ENCODE measurements at regions of chr11 and their contacts with region 1.

Region 1: GRCh38 chr11:117443266-117444195 is 115.9 kb downstream of the CEP164 start:
- DNase-seq: peak; percentile 78 to 84
- H3K4me3 ChIP-seq: no peak overlapping the region
- H3K4me3 Mint-ChIP-seq: no peak overlapping the region
- H3K27ac Mint-ChIP-seq: no peak overlapping the region
- H3K4me1 ChIP-seq: no peaks in the 10 kb centered on the region
- H3K4me1 Mint-ChIP-seq: no peaks in the 10 kb centered on the region
- H3K27me3 ChIP-seq: no peaks in the 10 kb centered on the region; the same call in 1 of the 2 replicates
- H3K27me3 Mint-ChIP-seq: peaks cover 41% of the 10 kb centered on the region
- CTCF ChIP-seq: peak; percentile 86 to 98

Region 2: DNA sequence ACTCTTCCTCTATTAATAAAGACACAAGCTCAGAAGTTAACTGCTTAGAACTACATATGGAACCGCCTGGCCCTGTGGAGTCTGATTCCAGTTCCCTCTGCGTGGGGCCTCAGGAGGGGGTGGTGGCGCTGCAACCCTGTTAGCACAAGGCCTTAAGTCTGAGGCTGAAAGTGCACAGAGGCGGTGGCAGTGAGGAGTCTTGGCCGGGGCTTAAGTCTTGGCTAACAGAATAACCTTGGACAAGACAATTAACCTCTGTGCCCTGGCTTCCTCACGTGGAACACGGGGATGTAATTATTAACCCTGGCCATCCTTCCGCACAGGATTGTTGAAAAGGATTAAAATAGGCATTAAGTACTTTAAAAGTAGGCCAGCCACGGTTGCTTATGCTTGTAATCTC is 75.6 kb after region 1 on chr11:
- CTCF ChIA-PET with region 1: no interaction called
- POLR2A ChIA-PET with region 1: no interaction called
- intact Hi-C with region 1: no loop called
- DNase-seq: peak; percentile 63 to 83
- H3K4me3 ChIP-seq: no peak overlapping the region
- H3K4me3 Mint-ChIP-seq: no peak overlapping the region
- H3K27ac Mint-ChIP-seq: no peak overlapping the region
- H3K4me1 ChIP-seq: peaks cover 18% of the 10 kb centered on the region
- H3K4me1 Mint-ChIP-seq: peaks cover 13% of the 10 kb centered on the region
- H3K27me3 ChIP-seq: no peaks in the 10 kb centered on the region
- H3K27me3 Mint-ChIP-seq: no peaks in the 10 kb centered on the region
- CTCF ChIP-seq: peak in 1 of 2 experiments; percentile 68

Region 3: DNA sequence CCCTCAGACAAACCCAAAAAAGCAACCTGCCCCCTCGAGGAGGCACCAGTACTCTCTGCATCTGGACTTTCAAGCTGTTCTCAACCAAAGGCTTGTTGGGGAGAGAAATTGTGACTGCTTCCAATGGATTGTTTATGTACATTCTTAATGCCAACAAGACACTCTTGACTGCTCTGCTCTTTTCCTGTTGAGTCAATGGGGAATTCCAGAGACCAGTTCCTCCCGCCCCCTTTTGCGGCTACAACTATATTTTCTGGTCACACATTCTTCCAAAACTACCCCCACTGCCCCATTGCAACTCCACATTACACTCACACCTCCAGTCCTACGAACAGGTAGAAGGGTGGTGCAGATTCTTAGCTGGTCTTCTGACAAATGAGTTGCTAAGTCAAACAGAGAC is 166.5 kb after region 1 on chr11:
- CTCF ChIA-PET with region 1: no interaction called
- POLR2A ChIA-PET with region 1: no interaction called
- intact Hi-C with region 1: loop called (anchors 5 kb)
- DNase-seq: no peak
- H3K4me3 ChIP-seq: no peak overlapping the region
- H3K4me3 Mint-ChIP-seq: no peak overlapping the region
- H3K27ac Mint-ChIP-seq: no peak overlapping the region
- H3K4me1 ChIP-seq: no peaks in the 10 kb centered on the region
- H3K4me1 Mint-ChIP-seq: no peaks in the 10 kb centered on the region
- H3K27me3 ChIP-seq: peaks cover 8% of the 10 kb centered on the region; the same call in 1 of the 2 replicates
- H3K27me3 Mint-ChIP-seq: peaks cover 31% of the 10 kb centered on the region
- CTCF ChIP-seq: no peak

Region 4: DNA sequence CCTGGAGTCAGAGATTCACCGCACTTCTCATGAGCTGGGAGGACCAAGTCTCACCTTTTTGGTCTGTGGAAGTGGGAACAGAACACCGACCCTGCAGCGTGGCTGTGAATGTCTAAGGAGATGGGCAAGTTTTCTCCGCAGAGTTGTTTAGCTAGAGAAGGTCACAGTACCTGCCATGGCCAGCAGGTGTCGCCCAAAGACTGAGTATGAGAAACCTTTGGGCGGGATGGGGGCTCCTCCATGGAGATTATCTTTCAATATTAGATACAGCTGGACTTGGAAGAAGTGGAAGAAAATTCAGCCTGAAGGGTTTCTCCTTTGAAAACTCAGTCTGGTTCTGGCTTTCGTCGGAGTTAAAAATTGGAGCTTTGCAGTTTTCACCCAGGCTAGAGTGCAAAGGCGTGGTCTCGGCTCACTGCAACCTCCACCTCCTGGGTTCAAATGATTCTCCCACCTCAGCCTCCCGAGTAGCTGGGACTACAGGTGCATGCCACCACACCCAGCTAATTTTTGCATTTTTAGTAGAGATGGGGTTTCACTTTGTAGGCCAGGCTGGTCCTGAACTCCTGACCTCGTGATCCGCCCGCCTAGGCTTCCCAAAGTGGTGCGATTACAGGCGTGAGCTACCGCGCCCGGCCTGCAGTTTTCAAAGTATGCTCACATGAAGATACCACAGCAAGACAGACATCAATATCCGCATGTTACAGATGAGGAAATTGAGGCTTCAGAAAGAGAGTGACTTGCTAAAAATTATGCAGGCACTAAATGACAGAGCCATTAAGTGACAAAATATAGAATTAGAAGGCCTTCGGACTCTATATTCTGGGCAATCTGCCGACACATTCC is 364.2 kb after region 1 on chr11:
- CTCF ChIA-PET with region 1: interaction called, 38 read pairs
- POLR2A ChIA-PET with region 1: no interaction called
- intact Hi-C with region 1: loop called (anchors 1 kb)
- DNase-seq: peak; percentile 76 to 85
- H3K4me3 ChIP-seq: no peak overlapping the region
- H3K4me3 Mint-ChIP-seq: no peak overlapping the region
- H3K27ac Mint-ChIP-seq: no peak overlapping the region
- H3K4me1 ChIP-seq: no peaks in the 10 kb centered on the region
- H3K4me1 Mint-ChIP-seq: no peaks in the 10 kb centered on the region
- H3K27me3 ChIP-seq: no peaks in the 10 kb centered on the region
- H3K27me3 Mint-ChIP-seq: peaks cover 15% of the 10 kb centered on the region
- CTCF ChIP-seq: peak; percentile 97 to 98

Region 5: GRCh38 chr11:117828611-117829368 is 385.3 kb after region 1 on chr11:
- CTCF ChIA-PET with region 1: no interaction called
- POLR2A ChIA-PET with region 1: no interaction called
- intact Hi-C with region 1: no loop called
- DNase-seq: peak in 1 of 2 experiments; percentile 46
- H3K4me3 ChIP-seq: no peak overlapping the region
- H3K4me3 Mint-ChIP-seq: no peak overlapping the region
- H3K27ac Mint-ChIP-seq: no peak overlapping the region
- H3K4me1 ChIP-seq: peaks cover 17% of the 10 kb centered on the region
- H3K4me1 Mint-ChIP-seq: peaks cover 27% of the 10 kb centered on the region
- H3K27me3 ChIP-seq: no peaks in the 10 kb centered on the region
- H3K27me3 Mint-ChIP-seq: no peaks in the 10 kb centered on the region
- CTCF ChIP-seq: no peak

Measured in Caco-2 (cell line).